Panc1 (cell line): ENCODE measurements at regions of chr12 and their contacts with region 1.

Region 1: GRCh38 chr12:8011331-8011730 is 21.2 kb upstream of the FOXJ2 start:
- DNase-seq: no peak
- ATAC-seq: no peak
- H3K4me3 ChIP-seq: no peak overlapping the region
- H3K27ac ChIP-seq: no peak overlapping the region
- H3K4me1 ChIP-seq: no peaks in the 10 kb centered on the region
- H3K27me3 ChIP-seq: no peaks in the 10 kb centered on the region
- CTCF ChIP-seq: no peak

Region 2: DNA sequence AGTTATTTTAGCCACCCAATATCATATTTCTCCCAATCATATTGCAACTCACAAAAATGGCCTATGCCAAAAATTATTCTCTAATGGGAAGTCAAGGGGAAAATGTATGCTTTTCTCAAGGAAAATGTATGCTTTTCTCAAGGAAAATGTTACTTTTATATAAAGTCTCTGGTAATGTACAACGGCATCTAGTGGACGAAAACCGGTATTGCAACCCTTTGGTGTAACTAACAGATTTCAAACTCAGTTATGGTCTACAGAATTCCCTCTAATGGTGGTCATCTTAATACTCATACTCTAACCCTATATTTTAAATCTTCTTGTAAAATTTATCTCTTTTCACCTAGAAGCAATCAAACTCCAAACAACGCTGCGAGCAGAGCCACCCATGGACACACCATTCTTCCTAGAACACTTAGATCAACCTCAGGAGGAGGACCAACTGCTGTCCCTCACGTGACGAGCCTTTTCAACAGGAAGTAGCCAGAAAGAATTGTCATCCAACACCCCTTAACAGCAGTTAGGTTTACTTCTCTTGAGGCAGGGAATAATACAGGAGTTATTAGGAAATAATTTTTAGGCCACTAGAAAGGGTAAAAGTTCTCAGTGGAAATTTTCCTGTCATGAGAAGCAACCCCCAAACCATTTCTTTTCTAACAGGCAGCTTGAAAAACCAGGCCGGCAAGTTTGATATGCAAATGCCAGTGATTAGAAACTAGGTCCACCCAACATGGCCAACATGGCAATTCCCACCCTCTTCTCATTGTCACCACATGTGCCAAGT is 365.7 kb before region 1 on chr12:
- CTCF ChIA-PET with region 1: no interaction called
- POLR2A ChIA-PET with region 1: no interaction called
- in situ Hi-C with region 1: no loop called
- intact Hi-C with region 1: no loop called
- DNase-seq: no peak
- ATAC-seq: no peak
- H3K4me3 ChIP-seq: no peak overlapping the region
- H3K27ac ChIP-seq: no peak overlapping the region
- H3K4me1 ChIP-seq: no peaks in the 10 kb centered on the region
- H3K27me3 ChIP-seq: no peaks in the 10 kb centered on the region
- CTCF ChIP-seq: peak; percentile 79

Region 3: DNA sequence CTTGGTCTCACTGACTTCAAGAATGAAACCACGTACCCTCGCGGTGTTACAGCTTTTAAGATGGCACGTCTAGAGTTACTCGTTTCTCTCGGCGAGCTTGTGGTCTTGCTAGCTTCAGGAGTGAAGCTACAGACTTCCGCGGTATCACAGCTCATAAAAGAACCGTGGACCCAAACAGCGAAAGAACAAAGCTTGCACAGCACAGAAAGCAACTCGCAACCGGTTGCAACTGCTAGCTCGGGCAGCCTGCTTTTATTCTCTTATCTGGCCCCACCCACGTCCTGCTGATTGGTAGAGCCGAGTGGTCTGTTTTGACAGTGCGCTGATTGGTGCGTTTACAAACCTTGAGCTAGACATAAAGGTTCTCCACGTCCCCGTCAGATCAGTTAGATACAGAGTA is 259.9 kb before region 1 on chr12:
- CTCF ChIA-PET with region 1: no interaction called
- POLR2A ChIA-PET with region 1: no interaction called
- in situ Hi-C with region 1: no loop called
- intact Hi-C with region 1: no loop called
- DNase-seq: no peak
- ATAC-seq: no peak
- H3K4me3 ChIP-seq: no peak overlapping the region
- H3K27ac ChIP-seq: no peak overlapping the region
- H3K4me1 ChIP-seq: no peaks in the 10 kb centered on the region
- H3K27me3 ChIP-seq: no peaks in the 10 kb centered on the region
- CTCF ChIP-seq: no peak

Region 4: DNA sequence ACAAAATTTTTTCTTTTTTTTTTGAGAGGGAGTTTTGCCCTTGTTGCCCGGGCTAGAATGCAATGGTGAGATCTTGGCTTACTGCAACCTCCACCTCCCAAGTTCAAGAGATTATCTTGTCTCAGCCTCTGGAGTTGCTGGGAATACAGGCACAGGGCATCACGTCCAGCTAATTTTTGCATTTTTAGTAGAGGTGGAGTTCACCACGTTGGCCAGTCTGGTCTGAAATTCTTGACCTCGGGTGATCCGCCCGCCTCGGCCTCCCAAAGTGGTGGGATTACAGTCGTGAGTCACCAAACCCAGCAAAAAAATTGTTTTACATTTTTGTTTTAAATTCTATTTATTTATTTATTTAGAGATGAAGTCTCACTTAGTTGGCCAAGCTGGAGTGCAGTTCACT is 133.9 kb before region 1 on chr12:
- CTCF ChIA-PET with region 1: interaction called, 11 read pairs
- POLR2A ChIA-PET with region 1: no interaction called
- in situ Hi-C with region 1: no loop called
- intact Hi-C with region 1: no loop called
- DNase-seq: no peak
- ATAC-seq: no peak
- H3K4me3 ChIP-seq: no peak overlapping the region
- H3K27ac ChIP-seq: no peak overlapping the region
- H3K4me1 ChIP-seq: no peaks in the 10 kb centered on the region
- H3K27me3 ChIP-seq: no peaks in the 10 kb centered on the region
- CTCF ChIP-seq: no peak

Region 5: GRCh38 chr12:8081251-8081920 is 70.1 kb after region 1 on chr12:
- CTCF ChIA-PET with region 1: no interaction called
- POLR2A ChIA-PET with region 1: no interaction called
- in situ Hi-C with region 1: no loop called
- intact Hi-C with region 1: no loop called
- DNase-seq: no peak
- ATAC-seq: peak; percentile 72
- H3K4me3 ChIP-seq: peak overlapping the region; percentile 91 to 93
- H3K27ac ChIP-seq: peak overlapping the region; percentile 96
- H3K4me1 ChIP-seq: no peaks in the 10 kb centered on the region
- H3K27me3 ChIP-seq: no peaks in the 10 kb centered on the region
- CTCF ChIP-seq: no peak